Activated T-helper 1 cell treated with anti-CD3 and anti-CD28 coated beads, Interleukin-12 subunit alpha, Interleukin-12 subunit beta, Interleukin-2, Interleukin-4 antibody, amounts not matched to agents 30 ng/mL and 10 ng/mL and 1 ng/mL, durations not matched to agents 14 hours and 24 hours and 36 hours (primary cell): ENCODE measurements at regions of chr17 and their contacts with region 1.

Region 1: GRCh38 chr17:63549946-63550807 is at the start of gene DCAF7:
- DNase-seq: peak; percentile 99
- H3K4me3 Mint-ChIP-seq: peak within 1 kb of the TSS; percentile 96
- H3K27ac Mint-ChIP-seq: peak within 1 kb of the TSS; percentile 96
- H3K4me1 Mint-ChIP-seq: peaks cover 36% of the 10 kb centered on the region
- H3K27me3 Mint-ChIP-seq: no peaks in the 10 kb centered on the region
- total RNA-seq, gene DCAF7: 116 and 121 TPM in 2 replicates

Region 2: DNA sequence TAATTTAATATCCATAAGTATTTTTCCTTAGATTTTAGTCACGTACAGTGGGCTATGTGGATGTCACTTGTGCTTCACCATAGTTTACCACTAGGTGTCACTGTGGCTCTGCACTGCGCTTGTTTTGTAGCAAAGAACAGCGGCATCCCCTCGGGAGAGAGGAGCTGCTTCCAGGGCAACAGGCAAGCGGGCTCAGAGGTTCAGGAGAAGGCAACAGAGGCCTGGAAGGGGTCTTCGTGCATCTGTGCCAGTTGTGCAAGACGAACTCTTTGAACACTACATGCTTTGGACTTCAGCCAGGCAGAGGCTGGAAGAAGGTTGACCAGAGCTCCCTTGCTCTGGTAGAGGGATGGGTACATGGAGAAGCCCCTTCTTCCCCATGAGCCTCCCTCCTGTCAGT is 124.7 kb before region 1 on chr17:
- intact Hi-C with region 1: loop called (anchors 5 kb)
- DNase-seq: peak; percentile 58
- H3K4me3 Mint-ChIP-seq: no peak overlapping the region
- H3K27ac Mint-ChIP-seq: no peak overlapping the region
- H3K4me1 Mint-ChIP-seq: peaks cover 34% of the 10 kb centered on the region
- H3K27me3 Mint-ChIP-seq: peaks cover 6% of the 10 kb centered on the region

Region 3: DNA sequence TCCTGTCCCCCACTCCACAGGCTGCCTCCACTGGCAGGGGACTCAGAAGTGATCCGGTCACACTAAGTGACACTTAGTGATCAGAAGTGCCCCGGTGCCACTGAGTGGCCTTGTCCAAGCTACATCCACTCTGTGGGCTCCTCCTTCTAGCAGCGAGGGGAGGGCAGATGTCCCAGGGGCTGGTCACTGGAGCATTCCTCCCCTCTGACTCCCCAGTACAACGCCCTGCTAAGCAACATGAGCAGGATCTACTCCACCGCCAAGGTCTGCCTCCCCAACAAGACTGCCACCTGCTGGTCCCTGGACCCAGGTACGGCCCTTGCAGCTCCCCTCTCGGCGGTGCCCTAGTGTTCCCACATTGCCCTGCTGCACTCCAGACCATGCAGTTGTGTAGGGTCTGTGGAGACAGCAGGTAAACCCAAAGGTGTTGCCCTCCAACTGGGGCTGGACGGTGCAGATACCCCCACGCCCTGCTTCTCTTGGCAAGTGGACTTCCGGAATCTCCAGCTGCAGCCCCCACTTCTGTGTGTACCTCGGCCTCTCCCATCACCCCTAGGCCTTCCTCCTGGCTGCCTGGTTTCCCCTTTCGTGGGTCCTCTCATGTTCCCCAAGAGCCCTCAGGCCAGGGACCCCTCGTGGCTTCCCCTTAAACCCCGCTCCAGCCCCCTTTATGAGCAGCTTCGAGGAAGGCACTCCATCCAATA is 71.2 kb before region 1 on chr17:
- intact Hi-C with region 1: loop called (anchors 2 kb)
- DNase-seq: peak; percentile 68
- H3K4me3 Mint-ChIP-seq: peak overlapping the region; percentile 67
- H3K27ac Mint-ChIP-seq: no peak overlapping the region
- H3K4me1 Mint-ChIP-seq: peaks cover 14% of the 10 kb centered on the region
- H3K27me3 Mint-ChIP-seq: peaks cover 36% of the 10 kb centered on the region

Region 4: GRCh38 chr17:63571763-63572271 is 21.6 kb after region 1 on chr17:
- intact Hi-C with region 1: loop called (anchors 2 kb)
- DNase-seq: no peak
- H3K4me3 Mint-ChIP-seq: no peak overlapping the region
- H3K27ac Mint-ChIP-seq: no peak overlapping the region
- H3K4me1 Mint-ChIP-seq: peaks cover 19% of the 10 kb centered on the region
- H3K27me3 Mint-ChIP-seq: no peaks in the 10 kb centered on the region

Region 5: DNA sequence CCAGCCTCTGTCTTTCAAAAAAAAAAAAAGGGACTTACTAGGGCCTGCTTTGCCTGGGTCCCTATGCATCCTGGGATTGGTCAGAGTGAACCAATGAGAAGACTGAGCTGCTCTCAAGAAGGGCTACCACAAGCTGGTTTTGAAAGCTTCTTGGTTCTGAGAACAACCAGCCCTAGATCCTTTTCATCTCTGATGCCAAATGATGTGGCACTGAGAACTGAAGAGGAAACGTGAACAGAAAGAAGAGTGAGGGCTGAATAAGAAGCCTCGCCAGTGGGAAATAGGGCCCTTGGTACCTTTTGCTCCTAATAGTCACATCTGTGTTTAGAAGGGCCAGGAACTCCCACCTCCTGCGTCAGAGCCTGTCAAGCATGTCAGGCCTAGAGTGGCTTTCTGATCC is 61.2 kb after region 1 on chr17:
- intact Hi-C with region 1: loop called (anchors 1 kb)
- DNase-seq: peak; percentile 11
- H3K4me3 Mint-ChIP-seq: peak overlapping the region; percentile 77
- H3K27ac Mint-ChIP-seq: peak overlapping the region; percentile 98
- H3K4me1 Mint-ChIP-seq: peaks cover 30% of the 10 kb centered on the region
- H3K27me3 Mint-ChIP-seq: no peaks in the 10 kb centered on the region

Region 6: GRCh38 chr17:63697341-63698286 is 147.4 kb after region 1 on chr17:
- intact Hi-C with region 1: loop called (anchors 1 kb)
- DNase-seq: peak; percentile 76
- H3K4me3 Mint-ChIP-seq: peak overlapping the region; percentile 96
- H3K27ac Mint-ChIP-seq: peak overlapping the region; percentile 96
- H3K4me1 Mint-ChIP-seq: peaks cover 53% of the 10 kb centered on the region
- H3K27me3 Mint-ChIP-seq: no peaks in the 10 kb centered on the region

Region 7: DNA sequence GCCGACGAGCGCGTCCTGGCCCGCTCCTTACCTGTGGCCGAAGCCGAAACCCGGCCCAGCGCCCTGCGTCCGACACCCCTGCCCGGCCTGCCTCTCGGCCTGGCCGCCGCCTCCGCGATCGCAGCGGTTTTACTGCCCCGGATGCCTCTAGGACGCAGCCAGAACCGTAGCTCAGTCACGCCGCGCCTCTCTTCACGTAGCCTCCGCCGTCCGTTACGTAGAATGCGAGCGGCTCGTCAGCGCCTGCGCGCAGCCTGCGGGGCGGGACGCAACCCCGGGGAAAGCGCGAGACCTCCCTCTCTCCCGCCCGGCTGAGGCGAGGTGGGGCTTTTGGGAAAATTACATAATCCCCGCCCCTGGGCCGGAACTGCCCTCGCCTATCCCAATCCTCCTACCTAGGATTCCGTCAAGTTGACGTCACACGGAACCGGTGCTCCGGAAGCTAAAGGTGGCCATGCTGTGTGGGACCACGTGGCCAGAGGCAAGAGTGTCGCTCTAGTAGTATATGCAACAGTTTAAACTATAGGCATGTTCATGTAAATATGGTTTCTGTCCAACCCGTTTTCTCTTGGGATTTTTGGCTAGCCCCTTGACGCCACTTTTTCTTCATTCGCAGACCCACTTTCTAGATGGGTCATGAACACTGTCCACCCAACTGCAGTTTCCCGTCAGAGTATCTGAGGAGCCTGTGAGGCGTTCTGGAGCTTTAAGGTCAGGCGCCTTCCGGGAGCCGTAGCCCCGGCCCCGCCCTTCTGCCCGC is 223.4 kb after region 1 on chr17 and contains the start of gene CCDC47:
- intact Hi-C with region 1: loop called (anchors 1 kb)
- DNase-seq: peak; percentile 99
- H3K4me3 Mint-ChIP-seq: peak within 1 kb of the TSS; percentile 96
- H3K27ac Mint-ChIP-seq: peak within 1 kb of the TSS; percentile 100
- H3K4me1 Mint-ChIP-seq: peaks cover 63% of the 10 kb centered on the region
- H3K27me3 Mint-ChIP-seq: no peaks in the 10 kb centered on the region
- total RNA-seq, gene CCDC47: 74.8 and 79.2 TPM in 2 replicates